ENCODE measurements at regions of chr4 and their contacts with region 1.

Region 1: GRCh38 chr4:80202190-80202711 is 4.9 kb downstream of the PRDM8 start:
- DNase-seq: peak in 1 of 2 donors; percentile 64
- ATAC-seq: peak; percentile 44 to 75
- H3K4me3 ChIP-seq: peak overlapping the region; percentile 54 to 79 (median 62)
- H3K27ac ChIP-seq: peak overlapping the region; percentile 48 to 66 (median 52)
- H3K4me1 ChIP-seq: peaks cover 5 to 10% of the 10 kb centered on the region in 2 donors
- H3K27me3 ChIP-seq: peaks cover 55 to 56% (median 56%) of the 10 kb centered on the region in 3 donors
- CTCF ChIP-seq: peak; percentile 37 to 84 (median 78)
- POLR2A ChIP-seq: no peak

Region 2: GRCh38 chr4:78951862-78952472 is 1250.3 kb before region 1 on chr4:
- in situ Hi-C with region 1: loop called in 1 of 4 experiments (anchors 25 kb)
- intact Hi-C with region 1: no loop called
- DNase-seq: peak in 1 of 2 donors; percentile 13
- ATAC-seq: peak; percentile 78
- H3K4me3 ChIP-seq: no peak overlapping the region
- H3K27ac ChIP-seq: no peak overlapping the region
- H3K4me1 ChIP-seq: no peaks in the 10 kb centered on the region
- H3K27me3 ChIP-seq: no peaks in the 10 kb centered on the region
- CTCF ChIP-seq: peak; percentile 54 to 69 (median 66)
- POLR2A ChIP-seq: no peak

Region 3: GRCh38 chr4:80125252-80126177 is 76.7 kb before region 1 on chr4:
- in situ Hi-C with region 1: no loop called
- intact Hi-C with region 1: no loop called
- DNase-seq: no peak
- ATAC-seq: no peak
- H3K4me3 ChIP-seq: no peak overlapping the region
- H3K27ac ChIP-seq: no peak overlapping the region
- H3K4me1 ChIP-seq: no peaks in the 10 kb centered on the region
- H3K27me3 ChIP-seq: no peaks in the 10 kb centered on the region
- CTCF ChIP-seq: peak in 1 of 5 experiments; percentile 13
- POLR2A ChIP-seq: no peak

Region 4: GRCh38 chr4:80221161-80221560 is 18.9 kb after region 1 on chr4:
- in situ Hi-C with region 1: no loop called
- intact Hi-C with region 1: no loop called
- DNase-seq: no peak
- ATAC-seq: no peak
- H3K4me3 ChIP-seq: no peak overlapping the region
- H3K27ac ChIP-seq: no peak overlapping the region
- H3K4me1 ChIP-seq: no peaks in the 10 kb centered on the region
- H3K27me3 ChIP-seq: peaks cover 0 to 17% (median 5%) of the 10 kb centered on the region in 3 donors
- CTCF ChIP-seq: no peak
- POLR2A ChIP-seq: no peak

Region 5: DNA sequence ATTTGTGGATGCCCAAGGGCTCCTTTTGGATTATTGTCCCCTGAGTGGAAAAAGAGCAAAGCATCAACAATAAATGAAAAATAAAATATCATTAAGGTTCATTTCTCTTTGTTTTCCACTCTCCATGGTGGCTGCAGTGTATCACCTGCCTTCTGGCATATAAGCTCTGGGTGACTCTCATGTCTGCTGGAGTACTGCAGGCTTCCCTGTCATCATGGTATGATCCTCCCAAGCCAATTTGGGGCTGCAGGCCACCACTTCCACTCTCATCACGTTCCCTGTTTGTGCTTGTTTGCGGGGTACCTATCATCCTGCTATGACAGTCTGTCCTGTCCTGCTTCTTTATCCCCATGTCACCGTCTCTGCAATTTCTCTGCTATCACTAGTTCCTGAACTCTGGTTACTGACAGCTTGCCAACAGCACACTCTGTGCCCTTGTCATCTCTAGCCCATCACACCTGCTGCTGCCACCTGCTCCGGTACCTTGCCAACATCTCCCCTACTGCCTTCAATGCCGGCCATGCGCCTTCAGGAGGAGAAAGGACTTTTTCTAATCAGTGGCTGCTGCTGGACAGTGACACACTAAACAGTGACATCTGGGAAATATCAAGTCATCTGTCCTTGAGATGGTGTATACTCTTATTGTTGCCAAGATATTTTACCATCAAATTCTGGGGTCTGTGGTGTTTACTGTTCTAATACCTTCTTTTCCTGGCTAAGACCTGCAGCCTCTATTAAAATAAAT is 41.2 kb after region 1 on chr4:
- in situ Hi-C with region 1: no loop called
- intact Hi-C with region 1: no loop called
- DNase-seq: no peak
- ATAC-seq: no peak
- H3K4me3 ChIP-seq: no peak overlapping the region
- H3K27ac ChIP-seq: no peak overlapping the region
- H3K4me1 ChIP-seq: no peaks in the 10 kb centered on the region
- H3K27me3 ChIP-seq: peaks cover 0 to 2% (median 2%) of the 10 kb centered on the region in 3 donors
- CTCF ChIP-seq: no peak
- POLR2A ChIP-seq: no peak